ENCODE measurements at regions of chr4 and their contacts with region 1.

Region 1: DNA sequence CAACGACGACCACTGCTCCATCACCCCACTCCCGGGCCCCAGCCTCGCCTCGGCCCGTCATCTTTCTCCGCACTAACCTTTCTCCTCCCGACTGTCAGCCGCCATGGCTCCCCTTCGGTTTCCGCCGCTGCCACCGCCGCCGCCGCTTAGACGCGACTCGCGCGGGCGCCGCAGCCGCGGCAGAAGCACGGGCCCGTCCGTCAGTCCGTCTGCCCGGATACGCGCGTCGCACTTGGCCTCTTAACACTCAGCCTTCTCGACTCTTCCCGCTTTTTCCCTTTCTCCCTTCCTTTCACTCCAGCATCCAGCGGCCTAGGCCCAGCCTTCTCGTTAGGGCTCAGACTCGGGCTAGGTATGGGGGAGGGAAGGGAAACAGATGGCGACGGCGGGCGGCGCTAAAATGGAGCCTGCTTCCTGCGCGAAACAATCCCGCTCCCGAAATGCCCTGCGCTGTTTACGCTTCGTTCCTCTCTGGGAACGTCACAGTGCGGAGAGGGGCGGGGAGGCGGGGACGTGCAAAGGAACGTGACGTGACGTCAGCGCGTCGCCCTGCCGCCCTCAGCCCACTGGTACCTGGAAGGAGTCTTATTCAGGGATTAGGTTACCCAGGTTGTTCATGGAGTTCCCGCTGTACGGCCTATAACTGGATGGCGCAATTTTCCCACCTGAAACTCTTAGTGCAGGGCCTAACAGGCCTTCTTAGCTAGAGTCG is at the start of gene YTHDC1:
- DNase-seq: peak; percentile 98
- H3K4me3 Mint-ChIP-seq: peak within 1 kb of the TSS; percentile 97
- H3K27ac Mint-ChIP-seq: peak within 1 kb of the TSS; percentile 99
- H3K4me1 Mint-ChIP-seq: peaks cover 29% of the 10 kb centered on the region
- H3K27me3 Mint-ChIP-seq: no peaks in the 10 kb centered on the region
- total RNA-seq, gene YTHDC1: 76.3 to 81.0 TPM

Region 2: DNA sequence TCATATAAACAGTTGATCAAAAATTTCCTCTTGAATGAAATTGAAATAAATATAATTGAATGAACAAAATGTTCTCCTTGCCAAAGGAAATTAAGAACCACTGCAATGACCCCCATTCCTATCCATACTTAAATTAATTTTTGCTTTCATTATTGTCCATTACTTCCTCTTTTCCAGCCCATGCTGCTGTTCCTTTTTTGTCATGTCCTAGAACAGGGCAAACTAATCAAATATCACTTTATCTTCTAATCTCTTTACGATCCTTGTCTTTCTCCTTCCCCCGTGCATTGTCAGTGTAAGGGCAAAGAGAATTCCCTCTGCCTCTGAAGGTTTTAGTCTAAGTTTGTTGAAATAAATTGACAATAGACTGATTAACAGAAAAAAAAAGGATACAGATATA is 1007.5 kb before region 1 on chr4:
- CTCF ChIA-PET with region 1: no interaction called
- intact Hi-C with region 1: no loop called
- DNase-seq: no peak
- H3K4me3 Mint-ChIP-seq: no peak overlapping the region
- H3K27ac Mint-ChIP-seq: no peak overlapping the region
- H3K4me1 Mint-ChIP-seq: no peaks in the 10 kb centered on the region
- H3K27me3 Mint-ChIP-seq: peaks cover 10% of the 10 kb centered on the region

Region 3: DNA sequence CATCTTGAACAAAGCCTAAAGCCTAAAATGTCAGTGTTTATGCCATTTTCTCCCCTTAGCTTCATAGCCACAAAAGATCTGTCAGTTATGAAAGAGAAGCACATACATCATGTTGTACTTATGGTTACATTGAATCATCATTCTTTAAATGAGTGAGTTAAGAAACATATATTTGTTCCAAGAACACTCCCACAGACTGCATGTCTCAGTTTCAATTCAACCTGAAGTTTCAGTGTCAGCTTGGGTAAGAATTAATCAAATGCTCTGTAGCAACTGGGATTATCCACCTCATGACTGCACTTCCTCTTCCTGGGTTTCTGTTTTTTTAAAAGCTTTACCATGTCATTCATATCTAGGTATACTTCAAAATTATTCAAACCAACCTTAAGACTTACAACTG is 100.4 kb before region 1 on chr4:
- CTCF ChIA-PET with region 1: no interaction called
- intact Hi-C with region 1: loop called (anchors 1 kb)
- DNase-seq: peak; percentile 25
- H3K4me3 Mint-ChIP-seq: no peak overlapping the region
- H3K27ac Mint-ChIP-seq: peak overlapping the region; percentile 88
- H3K4me1 Mint-ChIP-seq: peaks cover 16% of the 10 kb centered on the region
- H3K27me3 Mint-ChIP-seq: peaks cover 7% of the 10 kb centered on the region

Region 4: GRCh38 chr4:68324519-68325262 is 25.1 kb before region 1 on chr4:
- CTCF ChIA-PET with region 1: interaction called, 3 read pairs
- intact Hi-C with region 1: loop called (anchors 2 kb)
- DNase-seq: no peak
- H3K4me3 Mint-ChIP-seq: no peak overlapping the region
- H3K27ac Mint-ChIP-seq: no peak overlapping the region
- H3K4me1 Mint-ChIP-seq: no peaks in the 10 kb centered on the region
- H3K27me3 Mint-ChIP-seq: no peaks in the 10 kb centered on the region

Region 5: DNA sequence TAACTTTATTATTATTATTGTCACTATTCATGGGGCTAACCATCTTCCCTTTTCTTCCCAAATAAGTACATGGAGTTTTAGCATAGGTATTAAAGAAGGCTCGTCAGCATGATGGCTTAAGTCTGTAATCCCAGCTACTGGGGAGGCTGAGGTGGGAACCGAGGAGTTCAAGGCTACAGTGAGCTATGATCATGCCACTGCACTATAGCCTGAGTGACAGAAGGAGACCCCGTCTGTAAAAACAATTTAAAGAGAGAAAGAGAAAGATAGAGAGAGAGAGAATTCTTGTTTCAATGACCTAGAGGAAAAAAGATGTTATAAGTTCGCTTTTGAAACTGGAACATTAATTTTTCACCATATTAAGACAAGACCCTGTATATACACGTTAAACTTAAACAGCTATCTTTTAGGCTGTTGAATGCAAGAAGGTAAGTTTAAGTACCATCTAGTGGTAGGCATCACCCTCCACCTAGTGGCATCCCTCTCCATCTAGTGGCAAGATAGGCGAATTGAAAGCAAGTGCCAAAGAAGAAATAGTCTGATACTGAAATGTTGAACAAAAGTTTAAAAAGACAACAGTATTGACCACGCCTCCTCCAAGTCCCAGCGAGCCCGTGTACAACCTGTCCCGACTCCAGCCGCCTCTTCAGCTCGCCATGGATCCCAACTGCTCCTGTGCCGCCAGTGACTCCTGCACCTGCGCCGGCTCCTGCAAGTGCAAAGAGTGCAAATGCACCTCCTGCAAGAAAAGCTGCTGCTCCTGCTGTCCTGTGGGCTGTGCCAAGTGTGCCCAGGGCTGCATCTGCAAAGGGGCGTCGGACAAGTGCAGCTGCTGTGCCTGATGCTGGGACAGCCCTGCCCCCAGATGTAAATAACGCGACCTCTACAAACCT is 26.1 kb after region 1 on chr4:
- CTCF ChIA-PET with region 1: interaction called, 5 read pairs
- intact Hi-C with region 1: loop called (anchors 1 kb)
- DNase-seq: peak; percentile 64
- H3K4me3 Mint-ChIP-seq: peak overlapping the region; percentile 62
- H3K27ac Mint-ChIP-seq: no peak overlapping the region
- H3K4me1 Mint-ChIP-seq: peaks cover 12% of the 10 kb centered on the region
- H3K27me3 Mint-ChIP-seq: no peaks in the 10 kb centered on the region